Activated CD4-positive, alpha-beta memory T cell treated with anti-CD3 and anti-CD28 coated beads for 36 hours (primary cell): ENCODE measurements at regions of chr14 and their contacts with region 1.

Region 1: GRCh38 chr14:35480128-35480769 is 53.7 kb upstream of the INSM2 start:
- DNase-seq: no peak
- H3K4me3 Mint-ChIP-seq: no peak overlapping the region
- H3K27ac Mint-ChIP-seq: no peak overlapping the region
- H3K4me1 Mint-ChIP-seq: peaks cover 7% of the 10 kb centered on the region
- H3K27me3 Mint-ChIP-seq: peaks cover 13% of the 10 kb centered on the region

Region 2: GRCh38 chr14:35533357-35534207 is 53.3 kb after region 1 on chr14 and contains the start of gene INSM2:
- CTCF ChIA-PET with region 1: no interaction called
- POLR2A ChIA-PET with region 1: no interaction called
- intact Hi-C with region 1: loop called (anchors 5 kb)
- DNase-seq: peak; percentile 71
- H3K4me3 Mint-ChIP-seq: peak within 1 kb of the TSS; percentile 65
- H3K27ac Mint-ChIP-seq: no peak within 1 kb of the TSS
- H3K4me1 Mint-ChIP-seq: peaks cover 11% of the 10 kb centered on the region
- H3K27me3 Mint-ChIP-seq: peaks cover 35% of the 10 kb centered on the region
- total RNA-seq, gene INSM2: not detected

Region 3: GRCh38 chr14:35600253-35600652 is 120.0 kb after region 1 on chr14:
- CTCF ChIA-PET with region 1: no interaction called
- POLR2A ChIA-PET with region 1: no interaction called
- intact Hi-C with region 1: no loop called
- DNase-seq: no peak
- H3K4me3 Mint-ChIP-seq: no peak overlapping the region
- H3K27ac Mint-ChIP-seq: no peak overlapping the region
- H3K4me1 Mint-ChIP-seq: no peaks in the 10 kb centered on the region
- H3K27me3 Mint-ChIP-seq: no peaks in the 10 kb centered on the region